H1 (cell line): ENCODE measurements at regions of chr7 and their contacts with region 1.

Region 1: GRCh38 chr7:128053023-128053422 is 21.8 kb upstream of the LRRC4 start:
- DNase-seq: no peak
- H3K4me3 ChIP-seq: no peak overlapping the region
- H3K27ac ChIP-seq: no peak overlapping the region
- H3K4me1 ChIP-seq: no peaks in the 10 kb centered on the region
- H3K27me3 ChIP-seq: no peaks in the 10 kb centered on the region
- CTCF ChIP-seq: no peak
- EP300 ChIP-seq: no peak
- POLR2A ChIP-seq: no peak
- RAD21 ChIP-seq: no peak

Region 2: DNA sequence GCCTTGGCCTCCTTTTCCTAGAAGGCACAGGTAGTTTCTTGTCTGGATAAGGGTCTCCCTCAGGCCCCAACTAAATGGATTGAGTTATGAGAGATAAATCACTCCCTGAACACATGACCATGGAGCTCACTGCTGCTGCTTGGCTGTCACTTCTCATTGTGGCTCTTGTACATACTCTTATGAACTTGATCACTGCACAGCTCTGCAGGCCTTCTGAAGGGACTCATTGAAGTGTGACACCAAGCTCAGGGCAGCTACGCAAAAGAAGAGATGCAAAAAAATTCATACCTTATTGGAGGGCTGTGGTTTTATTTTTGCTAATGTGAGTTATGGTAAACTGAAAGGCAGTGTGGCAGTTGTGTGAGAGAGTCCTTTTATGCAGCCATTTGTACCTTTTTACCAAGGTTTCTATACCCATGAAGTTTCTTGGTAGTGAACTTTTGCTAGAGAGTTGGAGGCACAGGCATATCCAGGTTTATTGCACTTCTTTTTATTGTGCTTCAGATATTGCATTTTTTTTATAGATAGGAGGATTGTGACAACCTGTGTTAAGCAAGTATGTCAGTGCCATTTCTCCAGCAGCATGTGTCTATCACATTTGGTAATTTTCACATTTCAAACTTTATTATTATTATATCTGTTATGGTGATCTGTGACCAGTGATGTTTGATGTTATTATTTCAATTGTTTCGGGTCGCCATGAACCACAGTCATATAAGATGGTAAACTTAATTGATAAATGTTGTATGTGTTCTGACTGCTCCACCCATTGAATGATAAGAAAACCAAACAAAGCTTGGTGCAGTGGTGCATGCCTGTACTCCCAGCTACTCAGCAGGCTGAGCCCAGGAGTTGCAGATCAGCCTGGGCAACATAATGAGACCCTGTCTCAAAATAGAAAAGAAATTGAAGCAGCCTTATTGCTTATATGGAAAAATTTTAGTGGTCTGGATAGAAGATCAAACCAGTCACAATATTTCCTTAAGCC is 122.4 kb before region 1 on chr7:
- CTCF ChIA-PET with region 1: no interaction called
- POLR2A ChIA-PET with region 1: no interaction called
- DNase-seq: no peak
- H3K4me3 ChIP-seq: no peak overlapping the region
- H3K27ac ChIP-seq: no peak overlapping the region
- H3K4me1 ChIP-seq: peaks cover 2 to 9% (median 4%) of the 10 kb centered on the region in 4 experiments; a peak in 5 of 7 replicates
- H3K27me3 ChIP-seq: no peaks in the 10 kb centered on the region
- CTCF ChIP-seq: no peak
- EP300 ChIP-seq: no peak
- POLR2A ChIP-seq: no peak
- RAD21 ChIP-seq: no peak

Region 3: GRCh38 chr7:128041203-128041602 is 11.8 kb before region 1 on chr7:
- CTCF ChIA-PET with region 1: interaction called, 113 read pairs
- POLR2A ChIA-PET with region 1: no interaction called
- DNase-seq: no peak
- H3K4me3 ChIP-seq: no peak overlapping the region
- H3K27ac ChIP-seq: no peak overlapping the region
- H3K4me1 ChIP-seq: no peaks in the 10 kb centered on the region
- H3K27me3 ChIP-seq: no peaks in the 10 kb centered on the region
- CTCF ChIP-seq: no peak
- EP300 ChIP-seq: no peak
- POLR2A ChIP-seq: no peak
- RAD21 ChIP-seq: no peak

Region 4: DNA sequence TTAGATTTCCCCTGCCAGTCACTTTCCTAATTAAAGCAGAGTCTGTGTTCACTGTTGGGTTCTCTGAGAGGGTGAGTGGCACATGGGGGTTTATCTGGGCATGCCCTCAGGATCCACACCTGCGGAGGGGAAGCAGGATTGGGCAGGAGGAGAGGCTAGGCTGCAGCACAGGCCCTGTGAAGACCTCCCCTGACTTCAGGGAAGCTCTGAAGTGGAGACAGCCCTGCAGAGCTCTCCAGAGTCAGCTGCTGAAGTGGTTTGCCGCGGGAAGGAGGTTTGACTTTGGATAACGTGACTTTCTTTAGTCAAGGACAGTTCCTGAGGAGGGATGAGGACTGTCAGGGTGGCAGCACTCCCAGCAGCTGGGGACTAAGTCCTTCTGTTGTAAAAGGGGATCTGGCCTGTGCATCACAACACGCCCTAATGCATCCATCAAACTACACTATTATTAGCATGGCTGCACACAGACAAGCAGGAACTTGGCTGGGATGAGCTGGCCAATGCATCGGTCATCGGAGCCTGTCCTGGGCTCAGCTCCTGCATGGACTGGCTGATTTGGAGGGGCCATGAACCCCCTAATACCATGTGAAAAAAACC is 137.1 kb after region 1 on chr7:
- CTCF ChIA-PET with region 1: no interaction called
- POLR2A ChIA-PET with region 1: no interaction called
- DNase-seq: peak in 1 of 2 experiments; percentile 34
- H3K4me3 ChIP-seq: no peak overlapping the region
- H3K27ac ChIP-seq: no peak overlapping the region
- H3K4me1 ChIP-seq: peaks cover 0 to 8% (median 2%) of the 10 kb centered on the region in 4 experiments; a peak in 3 of 7 replicates
- H3K27me3 ChIP-seq: no peaks in the 10 kb centered on the region; a peak in 2 of 7 replicates
- CTCF ChIP-seq: no peak
- EP300 ChIP-seq: no peak
- POLR2A ChIP-seq: no peak
- RAD21 ChIP-seq: no peak